CD8-positive, alpha-beta T cell (primary cell): ENCODE measurements at regions of chr22 and their contacts with region 1.

Region 1: GRCh38 chr22:22959147-22959827 is 71.7 kb downstream of the IGLL5 start:
- DNase-seq: peak; percentile 48 to 89 (median 80)
- ATAC-seq: peak; percentile 60
- H3K4me3 ChIP-seq: no peak overlapping the region
- H3K4me3 Mint-ChIP-seq: no peak overlapping the region
- H3K27ac ChIP-seq: no peak overlapping the region
- H3K27ac Mint-ChIP-seq: no peak overlapping the region
- H3K4me1 ChIP-seq: no peaks in the 10 kb centered on the region
- H3K4me1 Mint-ChIP-seq: peaks cover 5% of the 10 kb centered on the region
- H3K27me3 ChIP-seq: no peaks in the 10 kb centered on the region
- H3K27me3 Mint-ChIP-seq: peaks cover 10% of the 10 kb centered on the region
- CTCF ChIP-seq: peak; percentile 98

Region 2: GRCh38 chr22:22587577-22588188 is 371.6 kb before region 1 on chr22:
- CTCF ChIA-PET with region 1: interaction called, 119 read pairs
- POLR2A ChIA-PET with region 1: no interaction called
- intact Hi-C with region 1: loop called (anchors 2 kb)
- DNase-seq: no peak
- ATAC-seq: no peak
- H3K4me3 ChIP-seq: no peak overlapping the region
- H3K4me3 Mint-ChIP-seq: no peak overlapping the region
- H3K27ac ChIP-seq: no peak overlapping the region
- H3K27ac Mint-ChIP-seq: no peak overlapping the region
- H3K4me1 ChIP-seq: no peaks in the 10 kb centered on the region
- H3K4me1 Mint-ChIP-seq: no peaks in the 10 kb centered on the region
- H3K27me3 ChIP-seq: no peaks in the 10 kb centered on the region
- H3K27me3 Mint-ChIP-seq: peaks cover 23% of the 10 kb centered on the region
- CTCF ChIP-seq: no peak

Region 3: GRCh38 chr22:22720201-22720723 is 239.0 kb before region 1 on chr22:
- CTCF ChIA-PET with region 1: interaction called, 10 read pairs
- POLR2A ChIA-PET with region 1: no interaction called
- intact Hi-C with region 1: no loop called
- DNase-seq: peak in 6 of 9 experiments; percentile 33 to 83 (median 64)
- ATAC-seq: peak; percentile 68
- H3K4me3 ChIP-seq: no peak overlapping the region
- H3K4me3 Mint-ChIP-seq: no peak overlapping the region
- H3K27ac ChIP-seq: peak overlapping the region in 1 of 2 experiments; percentile 74
- H3K27ac Mint-ChIP-seq: peak overlapping the region; percentile 81
- H3K4me1 ChIP-seq: peaks cover 25% of the 10 kb centered on the region
- H3K4me1 Mint-ChIP-seq: peaks cover 30% of the 10 kb centered on the region
- H3K27me3 ChIP-seq: no peaks in the 10 kb centered on the region
- H3K27me3 Mint-ChIP-seq: no peaks in the 10 kb centered on the region
- CTCF ChIP-seq: peak; percentile 47

Region 4: DNA sequence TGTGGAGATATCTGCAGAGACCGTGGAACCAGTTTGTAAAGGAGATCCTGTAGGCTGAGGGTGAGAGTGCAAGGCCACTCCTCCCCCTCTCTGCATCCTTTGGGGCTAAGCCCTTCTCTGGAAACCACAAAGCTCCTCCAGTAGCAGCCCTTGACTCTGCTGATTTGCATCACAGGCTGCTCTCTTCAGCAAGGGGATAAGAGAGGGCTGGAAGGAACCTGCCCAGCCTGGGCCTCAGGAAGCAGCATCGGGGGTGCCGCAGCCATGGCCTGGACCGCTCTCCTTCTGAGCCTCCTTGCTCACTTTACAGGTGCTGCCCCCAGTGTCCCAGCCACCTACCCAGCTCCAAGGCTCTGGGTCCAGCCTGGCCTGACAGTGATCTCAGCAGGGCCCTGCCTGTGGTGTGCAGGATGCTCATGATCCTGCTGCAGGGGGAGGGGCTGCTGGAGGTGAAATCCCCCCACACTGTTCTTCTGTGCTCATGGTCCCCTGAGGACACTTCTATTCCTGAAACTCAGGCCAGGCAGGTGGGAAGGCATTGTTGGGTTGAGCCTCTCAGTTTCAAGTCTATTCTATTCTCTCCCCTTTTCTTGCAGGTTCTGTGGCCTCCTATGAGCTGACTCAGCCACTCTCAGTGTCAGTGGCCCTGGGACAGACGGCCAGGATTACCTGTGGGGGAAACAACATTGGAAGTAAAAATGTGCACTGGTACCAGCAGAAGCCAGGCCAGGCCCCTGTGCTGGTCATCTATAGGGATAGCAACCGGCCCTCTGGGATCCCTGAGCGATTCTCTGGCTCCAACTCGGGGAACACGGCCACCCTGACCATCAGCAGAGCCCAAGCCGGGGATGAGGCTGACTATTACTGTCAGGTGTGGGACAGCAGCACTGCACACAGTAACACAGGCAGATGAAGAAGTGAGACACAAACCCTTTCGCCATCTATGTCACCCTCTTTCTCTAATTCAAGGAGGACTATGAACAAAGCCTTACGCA is 140.1 kb before region 1 on chr22:
- CTCF ChIA-PET with region 1: no interaction called
- POLR2A ChIA-PET with region 1: no interaction called
- intact Hi-C with region 1: no loop called
- DNase-seq: peak in 8 of 9 experiments; percentile 23 to 83 (median 56)
- ATAC-seq: peak; percentile 42
- H3K4me3 ChIP-seq: peak overlapping the region; percentile 50 to 51
- H3K4me3 Mint-ChIP-seq: peak overlapping the region; percentile 75
- H3K27ac ChIP-seq: peak overlapping the region; percentile 48 to 80
- H3K27ac Mint-ChIP-seq: peak overlapping the region; percentile 93
- H3K4me1 ChIP-seq: peaks cover 94% of the 10 kb centered on the region
- H3K4me1 Mint-ChIP-seq: peaks cover 98% of the 10 kb centered on the region
- H3K27me3 ChIP-seq: no peaks in the 10 kb centered on the region
- H3K27me3 Mint-ChIP-seq: no peaks in the 10 kb centered on the region
- CTCF ChIP-seq: no peak

Region 5: GRCh38 chr22:22855617-22856308 is 103.5 kb before region 1 on chr22:
- CTCF ChIA-PET with region 1: interaction called, 10 read pairs
- POLR2A ChIA-PET with region 1: no interaction called
- intact Hi-C with region 1: no loop called
- DNase-seq: peak in 8 of 9 experiments; percentile 19 to 69 (median 40)
- ATAC-seq: peak; percentile 49
- H3K4me3 ChIP-seq: no peak overlapping the region
- H3K4me3 Mint-ChIP-seq: no peak overlapping the region
- H3K27ac ChIP-seq: no peak overlapping the region
- H3K27ac Mint-ChIP-seq: no peak overlapping the region
- H3K4me1 ChIP-seq: no peaks in the 10 kb centered on the region
- H3K4me1 Mint-ChIP-seq: peaks cover 1% of the 10 kb centered on the region
- H3K27me3 ChIP-seq: no peaks in the 10 kb centered on the region
- H3K27me3 Mint-ChIP-seq: no peaks in the 10 kb centered on the region
- CTCF ChIP-seq: peak; percentile 35

Region 6: GRCh38 chr22:22902247-22903001 is 56.9 kb before region 1 on chr22:
- CTCF ChIA-PET with region 1: no interaction called
- POLR2A ChIA-PET with region 1: no interaction called
- intact Hi-C with region 1: no loop called
- DNase-seq: no peak
- ATAC-seq: no peak
- H3K4me3 ChIP-seq: no peak overlapping the region
- H3K4me3 Mint-ChIP-seq: no peak overlapping the region
- H3K27ac ChIP-seq: no peak overlapping the region
- H3K27ac Mint-ChIP-seq: no peak overlapping the region
- H3K4me1 ChIP-seq: no peaks in the 10 kb centered on the region
- H3K4me1 Mint-ChIP-seq: no peaks in the 10 kb centered on the region
- H3K27me3 ChIP-seq: no peaks in the 10 kb centered on the region
- H3K27me3 Mint-ChIP-seq: no peaks in the 10 kb centered on the region
- CTCF ChIP-seq: no peak

Region 7: GRCh38 chr22:22948651-22949571 is 10.4 kb before region 1 on chr22:
- CTCF ChIA-PET with region 1: interaction called, 69 read pairs
- POLR2A ChIA-PET with region 1: no interaction called
- intact Hi-C with region 1: no loop called
- DNase-seq: peak in 1 of 9 experiments; percentile 39
- ATAC-seq: no peak
- H3K4me3 ChIP-seq: no peak overlapping the region
- H3K4me3 Mint-ChIP-seq: no peak overlapping the region
- H3K27ac ChIP-seq: no peak overlapping the region
- H3K27ac Mint-ChIP-seq: no peak overlapping the region
- H3K4me1 ChIP-seq: no peaks in the 10 kb centered on the region
- H3K4me1 Mint-ChIP-seq: no peaks in the 10 kb centered on the region
- H3K27me3 ChIP-seq: no peaks in the 10 kb centered on the region
- H3K27me3 Mint-ChIP-seq: peaks cover 14% of the 10 kb centered on the region
- CTCF ChIP-seq: no peak

Region 8: GRCh38 chr22:23144932-23145873 is 185.9 kb after region 1 on chr22 and contains the start of gene RAB36:
- CTCF ChIA-PET with region 1: interaction called, 15 read pairs
- POLR2A ChIA-PET with region 1: no interaction called
- intact Hi-C with region 1: no loop called
- DNase-seq: peak; percentile 73 to 97 (median 89)
- ATAC-seq: peak; percentile 50
- H3K4me3 ChIP-seq: peak within 1 kb of the TSS; percentile 35 to 40
- H3K4me3 Mint-ChIP-seq: peak within 1 kb of the TSS; percentile 78
- H3K27ac ChIP-seq: peak within 1 kb of the TSS; percentile 71 to 87
- H3K27ac Mint-ChIP-seq: peak within 1 kb of the TSS; percentile 86
- H3K4me1 ChIP-seq: peaks cover 55% of the 10 kb centered on the region
- H3K4me1 Mint-ChIP-seq: peaks cover 46% of the 10 kb centered on the region
- H3K27me3 ChIP-seq: no peaks in the 10 kb centered on the region
- H3K27me3 Mint-ChIP-seq: no peaks in the 10 kb centered on the region
- CTCF ChIP-seq: no peak
- total RNA-seq, gene RAB36: 0.52 to 0.64 TPM

Region 9: GRCh38 chr22:23539135-23539838 is 580.0 kb after region 1 on chr22:
- CTCF ChIA-PET with region 1: interaction called, 3 read pairs
- POLR2A ChIA-PET with region 1: no interaction called
- intact Hi-C with region 1: loop called in 1 of 2 experiments (anchors 5 kb)
- DNase-seq: peak; percentile 53 to 86 (median 72)
- ATAC-seq: peak; percentile 100
- H3K4me3 ChIP-seq: no peak overlapping the region
- H3K4me3 Mint-ChIP-seq: peak overlapping the region; percentile 59
- H3K27ac ChIP-seq: no peak overlapping the region
- H3K27ac Mint-ChIP-seq: no peak overlapping the region
- H3K4me1 ChIP-seq: no peaks in the 10 kb centered on the region
- H3K4me1 Mint-ChIP-seq: peaks cover 8% of the 10 kb centered on the region
- H3K27me3 ChIP-seq: no peaks in the 10 kb centered on the region
- H3K27me3 Mint-ChIP-seq: peaks cover 2% of the 10 kb centered on the region
- CTCF ChIP-seq: peak; percentile 70